ENCODE measurements at regions of chr17 and their contacts with region 1.

Region 1: DNA sequence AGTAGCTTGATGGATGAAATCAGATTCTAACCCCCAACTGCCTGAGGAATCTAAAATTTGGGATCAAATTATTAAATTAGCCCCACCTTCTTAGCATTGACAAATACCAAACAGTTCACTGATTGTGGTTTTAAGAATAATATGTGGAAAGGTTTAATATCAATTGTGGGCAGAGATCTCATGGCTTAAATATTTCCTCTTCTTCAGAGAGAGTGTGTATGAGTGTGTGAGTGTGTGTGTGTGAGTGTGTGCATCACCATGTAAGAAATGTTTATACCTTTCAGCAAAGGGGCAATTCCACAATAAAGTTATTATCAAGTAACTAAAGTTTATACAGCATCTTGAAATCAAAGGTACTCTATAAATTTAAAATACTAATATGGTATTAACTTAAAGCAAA is 3.2 kb downstream of the SMURF2 start:
- DNase-seq: no peak
- ATAC-seq: no peak
- H3K4me3 ChIP-seq: no peak overlapping the region
- H3K27ac ChIP-seq: no peak overlapping the region
- H3K4me1 ChIP-seq: peaks cover 0 to 26% (median 17%) of the 10 kb centered on the region in 3 donors
- H3K27me3 ChIP-seq: no peaks in the 10 kb centered on the region
- CTCF ChIP-seq: no peak

Region 2: DNA sequence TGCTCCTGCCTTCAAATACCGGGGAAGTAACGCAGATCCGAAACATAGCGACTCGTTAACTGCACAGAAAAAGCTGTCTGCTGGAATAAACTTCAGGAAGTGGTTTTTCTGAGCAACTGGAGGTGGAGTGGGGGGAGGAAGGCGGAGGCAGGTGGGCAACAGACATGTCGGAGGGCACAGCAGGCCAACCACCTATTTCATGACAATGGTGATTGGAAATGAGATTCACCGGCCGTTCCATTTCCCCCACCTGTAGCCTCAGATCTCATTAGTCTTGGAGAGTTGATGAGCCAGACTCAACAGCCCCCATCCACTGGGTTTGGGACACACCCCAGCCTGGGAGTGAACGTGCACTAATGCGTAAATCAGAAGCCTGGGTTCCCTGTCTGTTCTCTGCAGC is 260.6 kb before region 1 on chr17:
- intact Hi-C with region 1: no loop called
- DNase-seq: peak in 1 of 6 donors; percentile 18
- ATAC-seq: no peak
- H3K4me3 ChIP-seq: no peak overlapping the region
- H3K27ac ChIP-seq: no peak overlapping the region
- H3K4me1 ChIP-seq: peaks cover 2 to 8% (median 4%) of the 10 kb centered on the region in 3 donors
- H3K27me3 ChIP-seq: no peaks in the 10 kb centered on the region
- CTCF ChIP-seq: no peak

Region 3: DNA sequence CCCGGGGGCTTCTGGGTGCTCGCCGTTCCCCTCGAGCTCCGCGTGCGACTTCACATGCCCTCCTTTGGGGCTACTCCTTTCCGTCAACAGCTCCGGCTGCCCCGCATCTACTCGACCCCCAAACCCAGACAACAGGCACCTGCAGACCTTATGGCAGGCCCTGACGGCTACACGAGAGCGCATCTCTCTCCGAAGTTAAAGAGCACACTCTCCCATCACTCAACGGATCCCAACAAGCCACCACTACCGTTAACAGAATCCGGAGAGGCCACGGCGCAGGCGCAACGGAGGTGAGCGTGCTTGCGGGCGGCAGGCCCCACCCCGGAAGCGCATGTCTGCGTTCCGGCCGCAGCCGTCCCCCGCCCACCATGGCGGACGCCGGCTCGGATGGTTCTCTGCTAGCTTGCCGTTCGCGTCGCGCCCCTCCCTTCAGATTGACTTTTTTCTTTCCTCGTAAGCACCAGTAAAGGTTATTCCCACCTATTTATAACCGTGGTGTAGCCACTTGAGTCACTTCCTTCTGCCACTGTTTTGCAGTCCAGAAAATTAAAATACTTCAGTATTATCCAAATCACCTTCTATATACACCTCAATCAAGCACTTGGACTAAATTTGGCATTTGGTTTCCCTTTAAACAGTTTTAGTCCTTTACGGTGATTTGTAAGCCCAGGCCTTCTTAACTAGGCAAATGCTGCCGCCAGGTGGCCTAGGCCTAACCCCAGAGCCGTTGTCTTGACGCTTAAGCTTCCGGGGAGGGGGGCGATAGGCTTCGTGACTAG is 162.0 kb before region 1 on chr17 and contains the start of gene POLG2:
- intact Hi-C with region 1: loop called in 1 of 3 experiments (anchors 5 kb)
- DNase-seq: peak; percentile 89 to 98 (median 92)
- ATAC-seq: peak; percentile 94 to 98 (median 98)
- H3K4me3 ChIP-seq: peak within 1 kb of the TSS; percentile 66 to 79 (median 70)
- H3K27ac ChIP-seq: peak within 1 kb of the TSS; percentile 6 to 77 (median 40)
- H3K4me1 ChIP-seq: peaks cover 0 to 39% (median 23%) of the 10 kb centered on the region in 3 donors
- H3K27me3 ChIP-seq: no peaks in the 10 kb centered on the region
- CTCF ChIP-seq: peak in 1 of 4 donors; percentile 11
- total RNA-seq, gene POLG2: 4.8 to 12.9 (median 6.9) TPM

Region 4: DNA sequence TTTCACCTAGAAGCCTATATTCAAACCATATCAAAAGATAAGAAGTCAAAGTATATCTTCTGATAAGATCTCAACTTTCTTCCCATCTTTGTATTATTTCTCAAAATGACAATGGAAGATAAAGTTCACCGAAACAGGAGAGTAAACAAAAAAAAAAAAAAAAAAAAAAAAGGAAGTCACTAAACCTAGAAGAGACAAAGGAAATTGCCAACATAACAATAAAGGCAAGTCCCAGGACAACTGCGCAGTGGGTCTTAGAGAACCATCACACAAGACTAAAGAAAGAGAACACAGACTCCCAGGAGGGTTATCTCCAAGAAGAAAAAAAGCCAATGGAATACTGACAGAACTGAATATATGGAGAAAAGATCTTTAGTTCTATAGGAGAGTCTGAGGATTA is 62.5 kb before region 1 on chr17:
- intact Hi-C with region 1: no loop called
- DNase-seq: no peak
- ATAC-seq: no peak
- H3K4me3 ChIP-seq: no peak overlapping the region
- H3K27ac ChIP-seq: no peak overlapping the region
- H3K4me1 ChIP-seq: peaks cover 0 to 4% (median 0%) of the 10 kb centered on the region in 3 donors
- H3K27me3 ChIP-seq: no peaks in the 10 kb centered on the region
- CTCF ChIP-seq: no peak